AG04450 (cell line): ENCODE measurements at regions of chr3 and their contacts with region 1.

Region 1: DNA sequence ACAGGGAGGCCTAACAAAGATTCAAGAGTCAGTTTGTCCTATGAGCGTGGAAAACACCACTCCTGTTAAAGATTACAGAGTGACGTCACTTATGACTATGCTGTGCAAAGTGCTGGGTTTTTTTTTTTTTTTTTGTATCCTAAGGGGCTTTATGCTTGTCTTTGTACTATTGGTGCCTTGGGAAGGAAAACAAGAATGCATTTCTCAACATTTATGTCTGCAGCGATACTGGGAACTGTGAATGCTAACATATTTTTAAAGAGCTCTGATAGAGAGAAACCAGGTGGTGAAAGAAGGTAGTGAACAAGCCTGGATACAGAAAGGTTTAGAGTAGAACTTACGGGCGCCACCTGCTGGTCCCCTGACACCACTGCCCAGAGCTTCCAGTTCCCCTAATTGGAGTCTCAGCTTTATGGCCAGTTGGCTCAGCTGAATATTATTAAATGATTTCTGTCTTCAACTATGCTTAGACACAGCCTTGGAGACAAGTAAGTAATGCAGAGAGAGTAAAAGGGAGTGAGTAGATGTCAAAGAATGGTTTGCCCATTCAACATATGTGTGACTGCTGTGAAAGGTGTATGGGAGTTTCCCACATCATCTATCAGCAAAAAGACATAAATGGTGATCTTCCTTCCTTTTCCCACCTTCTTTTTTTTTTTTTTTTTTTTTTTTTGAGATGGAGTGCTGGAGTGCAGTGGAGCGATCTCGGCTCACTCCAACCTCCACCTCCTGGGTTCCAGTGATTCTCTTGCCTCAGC is 807.9 kb upstream of the CFAP20DC start:
- DNase-seq: peak; percentile 65
- H3K4me3 ChIP-seq: no peak overlapping the region
- H3K27ac ChIP-seq: no peak overlapping the region
- H3K27me3 ChIP-seq: no peaks in the 10 kb centered on the region
- CTCF ChIP-seq: peak; percentile 91

Region 2: DNA sequence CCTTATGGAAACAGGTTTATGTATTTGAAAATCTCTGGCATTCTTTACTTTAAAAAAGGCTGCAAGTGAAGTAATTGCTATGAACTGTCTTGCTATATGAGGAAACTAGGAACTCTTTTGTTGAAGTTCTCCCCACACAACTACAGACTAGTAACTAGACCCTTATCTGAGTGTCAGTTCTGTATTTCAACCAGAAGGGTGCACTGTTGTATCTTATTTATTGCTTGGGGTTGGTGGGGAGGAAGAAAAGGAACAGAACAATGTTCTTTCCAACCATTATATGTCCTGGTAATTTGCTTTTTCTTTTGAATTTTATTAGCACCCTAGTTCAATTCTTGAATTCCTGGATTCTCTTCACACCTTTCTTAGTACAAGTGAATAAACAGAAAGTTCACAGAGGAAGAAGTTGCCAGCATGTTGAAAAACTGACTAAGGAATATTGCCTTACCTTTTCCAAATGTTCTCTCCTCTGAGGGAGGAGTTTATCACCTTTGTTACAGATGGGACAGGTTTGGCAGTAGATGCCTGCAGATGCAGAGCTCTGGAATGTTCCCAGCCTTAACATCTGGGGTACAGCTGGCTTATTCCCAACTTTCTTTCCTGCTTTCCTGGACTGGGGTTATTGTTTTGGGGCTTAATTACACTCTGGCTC is 645.5 kb before region 1 on chr3:
- CTCF ChIA-PET with region 1: interaction called, 45 read pairs
- POLR2A ChIA-PET with region 1: no interaction called
- DNase-seq: peak; percentile 16
- H3K4me3 ChIP-seq: no peak overlapping the region
- H3K27ac ChIP-seq: no peak overlapping the region
- H3K27me3 ChIP-seq: no peaks in the 10 kb centered on the region
- CTCF ChIP-seq: peak; percentile 71

Region 3: GRCh38 chr3:59595830-59596229 is 261.9 kb before region 1 on chr3:
- CTCF ChIA-PET with region 1: interaction called, 12 read pairs
- POLR2A ChIA-PET with region 1: no interaction called
- DNase-seq: no peak
- H3K4me3 ChIP-seq: no peak overlapping the region
- H3K27ac ChIP-seq: no peak overlapping the region
- H3K27me3 ChIP-seq: peaks cover 8% of the 10 kb centered on the region
- CTCF ChIP-seq: no peak

Region 4: DNA sequence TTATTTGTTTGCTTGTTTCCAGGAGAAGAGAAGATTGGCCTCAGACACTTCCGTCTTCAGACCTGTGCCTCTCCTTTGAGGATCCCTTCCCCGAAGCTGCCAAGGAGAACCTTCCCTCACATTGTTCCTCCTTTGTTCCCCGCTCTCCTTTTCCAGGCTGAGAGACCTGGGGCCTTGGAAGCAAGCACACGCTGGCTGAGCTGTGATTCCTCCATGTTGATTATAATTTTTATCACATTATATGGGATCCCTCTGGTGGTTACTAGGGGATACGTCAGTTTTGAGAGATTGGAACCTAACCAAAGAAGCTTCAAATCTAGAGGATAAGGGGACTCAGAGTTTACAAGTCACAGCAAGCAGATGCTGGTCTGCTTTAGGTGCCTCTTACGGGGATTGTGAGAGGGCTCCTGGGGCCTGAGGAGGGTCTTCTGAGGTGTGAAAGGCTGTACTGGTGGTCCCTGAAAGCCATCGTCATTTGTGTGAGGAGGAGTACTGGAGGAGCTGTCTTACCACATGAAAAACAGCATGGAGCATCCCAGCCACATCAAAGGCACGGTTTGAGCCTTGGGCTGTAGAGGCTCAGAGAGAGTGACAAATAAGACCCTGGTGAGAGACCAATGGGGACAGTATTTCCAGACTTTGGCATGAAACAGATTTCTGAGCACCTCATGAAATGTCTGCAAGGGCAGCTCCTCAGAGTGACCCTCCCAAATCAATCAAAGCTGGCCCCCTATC is 47.9 kb before region 1 on chr3:
- CTCF ChIA-PET with region 1: interaction called, 11 read pairs
- POLR2A ChIA-PET with region 1: no interaction called
- DNase-seq: peak; percentile 18
- H3K4me3 ChIP-seq: no peak overlapping the region
- H3K27ac ChIP-seq: no peak overlapping the region
- H3K27me3 ChIP-seq: no peaks in the 10 kb centered on the region
- CTCF ChIP-seq: peak; percentile 61

Region 5: DNA sequence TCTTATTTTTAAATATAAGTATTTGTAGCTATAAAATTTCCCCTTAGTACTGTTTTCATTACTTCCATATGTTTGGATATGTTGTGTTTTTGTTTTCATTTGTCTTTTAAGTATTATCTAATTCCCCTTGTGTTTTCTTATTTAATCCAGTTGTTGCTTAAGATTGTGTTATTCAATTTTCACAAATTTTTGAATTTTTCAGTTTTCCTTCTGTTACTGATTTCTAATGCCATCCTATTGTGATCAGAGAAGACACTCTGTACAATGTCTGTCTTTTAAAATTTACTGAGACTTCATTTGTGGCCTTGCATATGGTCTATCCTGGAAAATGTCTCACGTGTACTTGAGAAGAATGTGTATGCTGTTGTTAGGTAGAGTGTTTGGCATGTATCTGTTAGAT is 12.4 kb before region 1 on chr3:
- CTCF ChIA-PET with region 1: interaction called, 13 read pairs
- POLR2A ChIA-PET with region 1: no interaction called
- DNase-seq: no peak
- H3K4me3 ChIP-seq: no peak overlapping the region
- H3K27ac ChIP-seq: no peak overlapping the region
- H3K27me3 ChIP-seq: no peaks in the 10 kb centered on the region
- CTCF ChIP-seq: no peak

Region 6: GRCh38 chr3:59895972-59896371 is 38.2 kb after region 1 on chr3:
- CTCF ChIA-PET with region 1: no interaction called
- POLR2A ChIA-PET with region 1: no interaction called
- DNase-seq: no peak
- H3K4me3 ChIP-seq: no peak overlapping the region
- H3K27ac ChIP-seq: no peak overlapping the region
- H3K27me3 ChIP-seq: no peaks in the 10 kb centered on the region
- CTCF ChIP-seq: no peak

Region 7: GRCh38 chr3:60076331-60076730 is 218.6 kb after region 1 on chr3:
- CTCF ChIA-PET with region 1: no interaction called
- POLR2A ChIA-PET with region 1: no interaction called
- DNase-seq: no peak
- H3K4me3 ChIP-seq: no peak overlapping the region
- H3K27ac ChIP-seq: no peak overlapping the region
- H3K27me3 ChIP-seq: no peaks in the 10 kb centered on the region
- CTCF ChIP-seq: no peak

Region 8: DNA sequence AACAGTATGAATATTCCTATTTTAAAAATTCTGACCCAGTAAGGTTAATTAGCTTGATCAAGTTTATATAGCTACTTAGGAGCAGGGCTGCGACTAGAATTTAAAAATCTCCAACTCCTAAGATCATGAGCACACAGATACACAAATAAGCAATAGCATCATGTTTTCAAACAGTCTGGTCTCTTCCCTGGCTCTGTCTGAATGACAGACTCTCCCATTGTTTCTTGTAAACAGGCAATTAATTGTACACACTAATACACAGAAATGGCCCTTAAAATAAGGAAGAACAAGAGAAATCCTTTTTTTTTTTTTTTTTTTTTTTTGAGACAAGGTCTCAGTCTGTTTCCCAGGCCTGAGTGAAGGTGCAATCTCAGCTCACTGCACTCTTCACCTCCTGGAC is 256.4 kb after region 1 on chr3:
- CTCF ChIA-PET with region 1: no interaction called
- POLR2A ChIA-PET with region 1: no interaction called
- DNase-seq: no peak
- H3K4me3 ChIP-seq: no peak overlapping the region
- H3K27ac ChIP-seq: no peak overlapping the region
- H3K27me3 ChIP-seq: no peaks in the 10 kb centered on the region
- CTCF ChIP-seq: no peak